Right ventricle myocardium inferior (tissue), 1 donor: ENCODE measurements at regions of chr3 and their contacts with region 1.

Region 1: GRCh38 chr3:108552267-108553159 is 36.7 kb downstream of the CIP2A start:
- DNase-seq: no peak
- ATAC-seq: peak; percentile 46

Region 2: DNA sequence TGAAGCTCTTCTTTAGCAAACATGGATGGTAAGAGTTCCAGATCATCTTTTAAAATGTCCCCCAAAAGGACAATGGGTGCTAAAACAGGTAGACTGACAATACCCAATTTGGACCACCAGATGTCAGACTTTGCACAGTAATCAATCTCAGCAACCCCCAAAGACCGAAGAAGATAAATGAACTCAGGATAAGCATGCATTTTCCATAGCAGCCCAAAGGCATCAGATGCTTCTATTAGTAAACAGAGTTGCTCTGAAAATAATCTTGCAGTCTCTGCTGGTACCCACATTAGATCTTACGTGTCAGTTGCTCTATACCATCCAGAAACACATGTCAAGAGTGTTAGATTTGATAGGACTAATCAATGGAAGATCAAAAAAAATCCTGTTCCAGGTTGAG is 62.7 kb before region 1 on chr3:
- intact Hi-C with region 1: loop called (anchors 1 kb)
- DNase-seq: no peak
- ATAC-seq: peak; percentile 67